WTC11 (cell line): ENCODE measurements at regions of chr15 and their contacts with region 1.

Region 1: GRCh38 chr15:40064221-40064894 is 25.4 kb upstream of the SRP14 start:
- DNase-seq: no peak
- ATAC-seq: 0 out of 2 replicates have a peak, but pooled peaks have one; percentile 19
- H3K4me3 Mint-ChIP-seq: no peak overlapping the region
- H3K27ac Mint-ChIP-seq: no peak overlapping the region; the same call in 1 of the 2 replicates
- H3K4me1 Mint-ChIP-seq: peaks cover 27% of the 10 kb centered on the region
- H3K27me3 Mint-ChIP-seq: no peaks in the 10 kb centered on the region
- CTCF ChIP-seq: no peak

Region 2: GRCh38 chr15:39934397-39935071 is 129.8 kb before region 1 on chr15:
- CTCF ChIA-PET with region 1: no interaction called
- POLR2A ChIA-PET with region 1: no interaction called
- DNase-seq: no peak
- ATAC-seq: peak; percentile 1; the same call in 1 of the 2 replicates
- H3K4me3 Mint-ChIP-seq: peak overlapping the region; percentile 89
- H3K27ac Mint-ChIP-seq: peak overlapping the region; percentile 78
- H3K4me1 Mint-ChIP-seq: peaks cover 52% of the 10 kb centered on the region
- H3K27me3 Mint-ChIP-seq: no peaks in the 10 kb centered on the region
- CTCF ChIP-seq: no peak

Region 3: DNA sequence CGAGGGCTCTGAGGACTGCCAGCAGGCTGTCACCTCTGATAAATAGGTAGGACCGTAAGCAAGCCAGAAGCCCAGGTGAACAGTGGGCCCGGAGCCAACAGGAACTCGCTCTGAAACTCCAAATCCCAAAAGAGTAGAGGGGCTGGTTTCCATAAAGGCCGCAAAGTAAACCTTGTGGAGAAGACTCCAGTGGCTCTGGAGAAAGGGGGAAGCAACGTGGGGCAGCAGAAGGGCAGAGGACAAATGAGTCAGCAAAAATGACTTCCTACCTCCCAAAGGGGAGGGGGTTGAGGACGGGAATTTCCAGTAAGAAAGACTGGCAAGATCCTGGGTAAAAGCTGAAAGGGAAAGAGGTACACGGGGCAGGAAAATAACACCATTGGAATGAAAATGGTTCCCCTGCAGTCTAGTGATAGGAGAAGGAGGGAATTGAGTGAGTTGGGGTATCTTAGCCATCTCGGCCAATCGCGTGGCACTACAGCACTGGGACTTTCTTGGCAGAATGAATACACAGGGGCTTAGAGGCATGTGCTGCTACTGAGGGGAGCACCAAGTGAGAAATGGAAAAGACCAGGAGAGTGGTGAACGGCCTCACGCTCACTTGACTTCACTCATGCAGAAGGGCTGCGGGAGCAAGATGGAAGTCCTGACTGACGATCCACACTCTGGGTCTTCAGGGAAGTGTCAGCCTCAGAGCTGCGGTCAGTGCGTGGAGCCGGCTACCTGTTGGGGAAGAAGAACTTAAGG is 11.1 kb after region 1 on chr15:
- CTCF ChIA-PET with region 1: interaction called, 18 read pairs
- POLR2A ChIA-PET with region 1: no interaction called
- DNase-seq: no peak
- ATAC-seq: no peak
- H3K4me3 Mint-ChIP-seq: no peak overlapping the region
- H3K27ac Mint-ChIP-seq: peak overlapping the region; percentile 34
- H3K4me1 Mint-ChIP-seq: peaks cover 23% of the 10 kb centered on the region
- H3K27me3 Mint-ChIP-seq: peaks cover 10% of the 10 kb centered on the region
- CTCF ChIP-seq: no peak

Region 4: GRCh38 chr15:40092256-40092978 is 28.1 kb after region 1 on chr15:
- CTCF ChIA-PET with region 1: interaction called, 12 read pairs
- POLR2A ChIA-PET with region 1: no interaction called
- DNase-seq: no peak
- ATAC-seq: no peak
- H3K4me3 Mint-ChIP-seq: peak overlapping the region; percentile 40
- H3K27ac Mint-ChIP-seq: peak overlapping the region; percentile 62
- H3K4me1 Mint-ChIP-seq: peaks cover 91% of the 10 kb centered on the region
- H3K27me3 Mint-ChIP-seq: no peaks in the 10 kb centered on the region; the same call in 1 of the 2 replicates
- CTCF ChIP-seq: no peak

Region 5: GRCh38 chr15:40115670-40116093 is 51.3 kb after region 1 on chr15:
- CTCF ChIA-PET with region 1: no interaction called
- POLR2A ChIA-PET with region 1: no interaction called
- DNase-seq: peak; percentile 63
- ATAC-seq: peak; percentile 84
- H3K4me3 Mint-ChIP-seq: no peak overlapping the region
- H3K27ac Mint-ChIP-seq: 0 out of 2 replicates have a peak overlapping the region, but pooled peaks have one; percentile 76
- H3K4me1 Mint-ChIP-seq: peaks cover 39% of the 10 kb centered on the region
- H3K27me3 Mint-ChIP-seq: no peaks in the 10 kb centered on the region
- CTCF ChIP-seq: no peak